Aorta (tissue), 5 donors: ENCODE measurements at regions of chr1 and their contacts with region 1.

Region 1: GRCh38 chr1:17540255-17541001 is 930 bp downstream of the ARHGEF10L start:
- DNase-seq: peak; percentile 88 to 90
- ATAC-seq: peak; percentile 87
- H3K4me3 ChIP-seq: peak overlapping the region; percentile 46 to 93
- H3K27ac ChIP-seq: peak overlapping the region; percentile 95 to 96
- H3K4me1 ChIP-seq: peaks cover 0 to 6% of the 10 kb centered on the region in 2 donors
- H3K27me3 ChIP-seq: no peaks in the 10 kb centered on the region

Region 2: DNA sequence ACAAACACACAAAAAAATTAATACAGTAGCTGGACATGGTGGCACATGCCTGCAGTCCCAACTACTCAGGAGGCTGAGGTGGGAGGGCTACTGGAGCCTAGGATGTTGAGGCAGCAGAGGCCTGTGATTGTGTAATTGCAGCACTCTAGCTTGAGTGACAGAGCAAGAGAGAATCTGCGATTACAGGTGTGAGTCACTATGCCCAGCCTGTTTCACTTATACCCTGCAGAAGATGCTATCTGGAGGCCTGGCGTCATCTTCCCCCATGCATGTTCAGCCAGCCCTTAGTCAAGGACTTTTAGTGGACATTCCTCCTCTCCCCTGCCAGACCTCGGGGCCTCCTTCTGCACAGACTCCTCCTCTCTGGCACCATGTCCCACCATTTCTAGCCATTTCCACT is 64.7 kb before region 1 on chr1:
- intact Hi-C with region 1: no loop called
- DNase-seq: no peak
- ATAC-seq: no peak
- H3K4me3 ChIP-seq: no peak overlapping the region
- H3K27ac ChIP-seq: no peak overlapping the region
- H3K4me1 ChIP-seq: no peaks in the 10 kb centered on the region
- H3K27me3 ChIP-seq: peaks cover 0 to 2% of the 10 kb centered on the region in 2 donors

Region 3: GRCh38 chr1:17569200-17570161 is 29.1 kb after region 1 on chr1:
- intact Hi-C with region 1: loop called in 1 of 2 experiments (anchors 5 kb)
- DNase-seq: peak; percentile 92 to 96
- ATAC-seq: peak; percentile 86
- H3K4me3 ChIP-seq: no peak overlapping the region
- H3K27ac ChIP-seq: peak overlapping the region; percentile 97 to 99
- H3K4me1 ChIP-seq: peaks cover 2 to 5% of the 10 kb centered on the region in 2 donors
- H3K27me3 ChIP-seq: no peaks in the 10 kb centered on the region

Region 4: DNA sequence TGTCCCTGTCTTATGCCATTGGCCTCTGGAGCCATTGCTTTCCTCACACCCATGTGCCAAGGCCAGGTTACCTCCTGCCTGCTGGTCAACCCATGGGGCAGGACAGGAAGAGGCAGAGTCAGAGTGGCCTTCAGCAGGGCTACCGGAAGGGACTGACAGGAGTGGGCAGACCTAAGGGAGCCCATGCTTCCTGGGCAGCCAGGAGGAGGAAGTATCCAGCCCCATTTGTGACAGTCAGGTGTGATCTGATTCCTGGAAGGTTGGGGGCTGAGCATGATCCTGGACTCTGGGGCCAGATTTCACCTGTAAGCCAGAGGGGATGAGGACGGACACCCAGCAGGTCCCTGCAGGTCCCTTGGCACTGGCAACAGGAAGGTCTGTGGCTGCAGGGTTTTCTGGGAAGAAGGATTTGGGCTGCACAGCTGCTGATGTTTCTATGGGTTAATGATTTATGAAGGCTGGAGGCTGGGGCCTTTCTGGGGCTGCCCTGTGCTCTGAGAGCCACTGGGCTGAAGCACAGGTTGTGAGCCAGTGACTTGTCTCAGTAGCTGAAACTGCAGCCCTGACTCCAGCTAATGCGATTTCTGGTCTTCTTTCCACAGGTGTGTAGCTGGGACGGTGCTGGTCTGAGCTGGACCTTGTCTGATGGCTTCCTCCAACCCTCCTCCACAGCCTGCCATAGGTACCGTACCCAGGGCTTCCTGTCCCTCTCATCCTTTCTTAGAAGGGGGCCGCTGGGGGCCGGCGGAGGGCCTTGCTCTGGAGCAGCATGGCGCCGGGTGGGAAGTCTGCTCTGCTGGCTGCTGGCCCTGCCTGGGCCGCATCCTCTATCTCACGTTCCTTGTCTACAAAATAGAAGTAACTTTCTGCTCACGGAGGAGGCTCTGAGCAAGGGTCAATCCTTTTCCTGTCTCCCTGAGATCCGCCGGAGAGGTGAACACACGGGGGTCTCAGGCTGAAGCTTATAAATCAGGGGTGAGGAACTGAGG is 39.8 kb after region 1 on chr1:
- intact Hi-C with region 1: loop called in 1 of 2 experiments (anchors 5 kb)
- DNase-seq: no peak
- ATAC-seq: no peak
- H3K4me3 ChIP-seq: no peak overlapping the region
- H3K27ac ChIP-seq: peak overlapping the region; percentile 15 to 78
- H3K4me1 ChIP-seq: peaks cover 0 to 6% of the 10 kb centered on the region in 2 donors
- H3K27me3 ChIP-seq: no peaks in the 10 kb centered on the region